HAP-1 (cell line): ENCODE measurements at regions of chr21 and their contacts with region 1.

Region 1: GRCh38 chr21:34745557-34746255 is 76.9 kb downstream of the CLIC6 start:
- DNase-seq: peak; percentile 84
- H3K4me3 ChIP-seq: peak overlapping the region; percentile 22
- H3K4me1 ChIP-seq: peaks cover 3% of the 10 kb centered on the region; the same call in 1 of the 2 replicates
- H3K27me3 ChIP-seq: no peaks in the 10 kb centered on the region

Region 2: DNA sequence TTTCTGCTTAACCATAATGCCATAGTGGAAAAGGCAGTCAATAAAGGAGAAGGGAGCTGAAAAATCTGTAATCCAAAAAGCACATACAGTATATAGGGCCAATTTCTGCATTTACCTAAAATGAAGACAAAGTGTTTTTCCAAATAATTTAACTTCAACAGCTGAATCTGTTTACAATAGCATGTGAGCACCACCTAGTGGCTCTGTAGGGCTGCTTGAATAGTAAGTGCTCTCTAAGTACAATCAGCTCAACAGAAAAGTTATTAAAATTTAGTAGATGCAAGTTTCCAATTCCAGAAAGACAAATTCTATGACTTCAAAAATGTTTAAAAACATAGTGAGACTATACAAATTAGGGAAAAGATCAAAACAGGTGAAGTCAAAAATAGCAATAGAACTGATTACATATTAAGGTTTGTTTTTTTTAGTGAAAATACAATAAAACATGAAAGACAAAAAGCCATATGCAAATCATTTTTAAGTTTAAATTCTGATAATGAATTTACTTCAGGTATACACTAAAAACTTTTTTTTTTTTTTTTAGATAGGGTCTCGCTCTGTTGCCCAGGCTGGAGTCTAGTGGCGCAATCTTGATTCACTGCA is 1094.6 kb after region 1 on chr21:
- in situ Hi-C with region 1: loop called (anchors 5 kb)
- DNase-seq: peak; percentile 63 to 65
- H3K4me3 ChIP-seq: no peak overlapping the region
- H3K4me1 ChIP-seq: no peaks in the 10 kb centered on the region
- H3K27me3 ChIP-seq: no peaks in the 10 kb centered on the region

Region 3: GRCh38 chr21:36028127-36029069 is 1282.7 kb after region 1 on chr21:
- in situ Hi-C with region 1: loop called (anchors 10 kb)
- DNase-seq: peak; percentile 60 to 78
- H3K4me3 ChIP-seq: no peak overlapping the region
- H3K4me1 ChIP-seq: no peaks in the 10 kb centered on the region
- H3K27me3 ChIP-seq: no peaks in the 10 kb centered on the region